Heart left ventricle (tissue), 16 donors: ENCODE measurements at regions of chr15 and their contacts with region 1.

Region 1: DNA sequence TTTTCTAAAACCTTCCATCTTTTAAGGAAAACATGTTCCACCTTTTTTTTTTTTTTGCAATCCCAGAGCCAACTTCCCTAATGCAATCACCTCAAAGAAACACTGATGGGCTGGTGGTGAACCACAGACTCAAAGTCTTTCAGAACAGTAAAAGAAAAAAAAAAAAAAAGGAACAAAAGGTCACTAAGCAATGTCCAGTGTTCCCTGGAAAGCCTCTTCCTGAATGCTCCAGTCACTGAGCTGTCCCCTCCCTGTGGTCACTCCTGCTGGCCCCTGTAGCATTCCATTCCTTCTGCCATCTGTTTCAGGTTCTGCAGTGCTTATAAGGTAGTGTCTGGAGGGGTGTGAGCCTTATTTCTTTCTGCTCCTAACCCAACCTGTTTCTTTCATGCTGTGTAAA is 53.3 kb downstream of the AAGAB start:
- DNase-seq: no peak
- ATAC-seq: no peak
- H3K4me3 ChIP-seq: no peak overlapping the region
- H3K27ac ChIP-seq: no peak overlapping the region
- H3K4me1 ChIP-seq: peaks cover 0 to 40% (median 26%) of the 10 kb centered on the region in 12 donors
- H3K27me3 ChIP-seq: no peaks in the 10 kb centered on the region
- CTCF ChIP-seq: no peak
- POLR2A ChIP-seq: no peak

Region 2: DNA sequence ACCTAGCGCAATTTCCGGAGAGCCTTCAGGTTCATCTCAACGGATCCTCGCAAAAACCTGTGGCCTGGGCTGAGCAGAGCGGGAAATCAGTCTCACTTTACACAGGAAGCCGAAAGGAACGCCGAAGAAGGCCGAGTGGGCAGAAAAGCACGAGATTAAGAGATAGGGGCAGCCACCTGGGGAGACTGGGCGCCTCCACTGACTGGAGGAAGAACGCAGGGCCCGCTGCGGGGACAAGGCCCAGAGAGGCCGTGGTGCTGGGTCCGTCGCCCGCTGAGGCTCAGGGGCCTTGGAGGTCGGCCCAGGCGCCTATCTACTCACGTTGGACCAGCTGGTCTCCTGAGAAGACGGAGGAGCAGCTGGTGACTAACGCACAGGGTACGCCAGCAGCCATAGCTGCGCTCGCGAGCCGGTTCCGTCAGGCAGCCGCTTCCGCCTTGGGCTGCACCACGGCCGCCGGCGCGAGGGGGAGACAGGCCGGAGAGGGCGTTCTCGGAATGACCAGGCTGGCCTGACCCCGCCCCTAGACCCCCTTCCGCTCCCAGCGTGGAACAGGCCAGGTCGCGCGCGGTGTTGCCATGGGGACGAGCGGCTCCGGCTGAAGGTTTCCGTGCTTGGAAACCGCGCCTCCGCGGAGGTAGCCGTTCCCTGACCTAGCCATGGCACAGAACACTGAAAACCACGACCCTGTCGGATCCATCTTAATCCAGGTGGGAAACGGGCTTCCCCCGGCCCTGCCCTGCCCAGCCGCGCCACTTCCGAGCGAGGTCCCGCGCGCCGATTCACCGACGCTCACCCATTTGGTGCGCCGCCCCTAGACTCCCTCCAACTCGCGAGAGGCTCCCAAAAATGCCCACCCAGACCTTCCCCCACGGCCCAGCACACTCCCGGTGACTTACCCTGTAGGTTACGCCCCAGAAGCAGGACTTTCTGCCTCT is 53.4 kb after region 1 on chr15 and contains the starts of genes AAGAB and IQCH:
- intact Hi-C with region 1: loop called in 2 of 10 experiments (anchors 2 to 5 kb)
- DNase-seq: peak; percentile 97 to 100 (median 98)
- ATAC-seq: peak; percentile 99 to 100 (median 100)
- H3K4me3 ChIP-seq: peak within 1 kb of the TSS; percentile 73 to 97 (median 88)
- H3K27ac ChIP-seq: peak within 1 kb of the TSS; percentile 10 to 91 (median 81)
- H3K4me1 ChIP-seq: peaks cover 0 to 29% (median 12%) of the 10 kb centered on the region in 12 donors
- H3K27me3 ChIP-seq: no peaks in the 10 kb centered on the region
- CTCF ChIP-seq: peak in 3 of 12 donors; percentile 13 to 22 (median 22)
- POLR2A ChIP-seq: peak in 1 of 2 donors; percentile 76
- total RNA-seq, gene AAGAB: 16.4 to 32.4 (median 28.0) TPM
- total RNA-seq, gene IQCH: 0.24 to 3.3 (median 1.4) TPM

Region 3: DNA sequence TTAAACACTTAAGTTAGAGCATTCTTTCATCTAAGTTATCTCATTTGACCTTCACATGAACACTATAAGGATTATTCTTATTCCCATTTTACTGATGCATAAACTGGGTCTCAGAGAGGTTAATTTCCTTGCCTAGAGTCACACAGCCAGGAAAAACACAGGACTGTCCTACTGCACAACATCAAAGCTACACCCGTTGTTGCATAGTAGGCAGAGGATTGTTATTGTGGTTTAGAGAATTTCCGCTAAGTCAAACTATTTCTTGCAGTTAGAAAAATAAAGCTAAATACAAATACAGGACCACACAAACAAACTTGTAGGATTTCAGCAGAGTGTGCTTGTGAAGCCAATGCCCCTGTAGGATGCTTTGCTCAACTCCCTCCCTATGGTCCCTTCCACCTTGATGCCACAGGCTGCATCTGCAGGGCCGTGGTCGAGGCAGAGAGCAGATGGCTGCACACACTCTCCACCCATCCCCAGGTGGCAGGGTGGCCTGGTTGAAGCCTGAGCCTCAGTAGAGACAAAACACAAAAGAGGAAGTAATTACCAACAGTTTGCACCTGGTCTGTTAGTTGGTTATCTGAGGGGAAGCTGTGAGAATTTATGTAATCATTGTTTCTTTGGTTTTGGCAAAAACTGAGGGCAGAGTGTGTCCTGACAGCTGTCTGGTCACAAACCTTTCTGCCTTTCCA is 583.1 kb after region 1 on chr15:
- intact Hi-C with region 1: no loop called
- DNase-seq: no peak
- ATAC-seq: no peak
- H3K4me3 ChIP-seq: no peak overlapping the region
- H3K27ac ChIP-seq: no peak overlapping the region
- H3K4me1 ChIP-seq: peaks cover 0 to 3% (median 0%) of the 10 kb centered on the region in 12 donors
- H3K27me3 ChIP-seq: no peaks in the 10 kb centered on the region
- CTCF ChIP-seq: no peak
- POLR2A ChIP-seq: no peak